Gastrocnemius medialis (tissue), 4 donors: ENCODE measurements at regions of chr5 and their contacts with region 1.

Region 1: DNA sequence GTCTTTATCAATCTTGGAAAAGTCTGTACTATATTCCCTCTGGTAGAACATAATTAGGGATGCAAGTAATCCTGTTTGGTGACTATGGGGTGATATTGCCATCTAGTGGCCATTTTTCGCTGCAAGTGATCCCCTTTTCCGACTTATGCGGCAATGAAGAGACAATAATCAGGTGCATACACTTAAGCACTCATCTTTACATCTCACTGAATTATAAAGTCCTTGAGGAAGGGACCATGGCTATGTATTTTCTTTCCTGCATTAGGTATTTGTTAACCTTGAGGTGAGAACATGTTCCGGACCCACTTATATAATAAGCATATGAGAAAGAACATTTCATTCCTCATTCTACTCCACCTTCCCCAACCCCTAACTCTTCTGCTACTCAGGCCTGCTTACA is 19.6 kb upstream of the LIX1 start:
- DNase-seq: peak; percentile 10 to 36
- ATAC-seq: peak; percentile 66 to 86
- H3K4me3 ChIP-seq: no peak overlapping the region
- H3K27ac ChIP-seq: no peak overlapping the region
- H3K4me1 ChIP-seq: no peaks in the 10 kb centered on the region
- H3K27me3 ChIP-seq: no peaks in the 10 kb centered on the region
- CTCF ChIP-seq: peak; percentile 75 to 89 (median 81)
- POLR2A ChIP-seq: no peak

Region 2: GRCh38 chr5:96344678-96345577 is 817.1 kb before region 1 on chr5:
- in situ Hi-C with region 1: no loop called
- intact Hi-C with region 1: loop called (anchors 10 kb)
- DNase-seq: no peak
- ATAC-seq: peak; percentile 93 to 97
- H3K4me3 ChIP-seq: no peak overlapping the region
- H3K27ac ChIP-seq: no peak overlapping the region
- H3K4me1 ChIP-seq: peaks cover under 1 to 7% of the 10 kb centered on the region in 2 donors
- H3K27me3 ChIP-seq: no peaks in the 10 kb centered on the region
- CTCF ChIP-seq: peak; percentile 35 to 63 (median 59)
- POLR2A ChIP-seq: no peak

Region 3: GRCh38 chr5:96629774-96630173 is 532.3 kb before region 1 on chr5:
- in situ Hi-C with region 1: loop called in 3 of 4 experiments (anchors 25 kb)
- intact Hi-C with region 1: no loop called
- DNase-seq: peak in 1 of 2 donors; percentile 10
- ATAC-seq: peak; percentile 61 to 93
- H3K4me3 ChIP-seq: no peak overlapping the region
- H3K27ac ChIP-seq: no peak overlapping the region
- H3K4me1 ChIP-seq: no peaks in the 10 kb centered on the region
- H3K27me3 ChIP-seq: no peaks in the 10 kb centered on the region
- CTCF ChIP-seq: no peak
- POLR2A ChIP-seq: no peak

Region 4: DNA sequence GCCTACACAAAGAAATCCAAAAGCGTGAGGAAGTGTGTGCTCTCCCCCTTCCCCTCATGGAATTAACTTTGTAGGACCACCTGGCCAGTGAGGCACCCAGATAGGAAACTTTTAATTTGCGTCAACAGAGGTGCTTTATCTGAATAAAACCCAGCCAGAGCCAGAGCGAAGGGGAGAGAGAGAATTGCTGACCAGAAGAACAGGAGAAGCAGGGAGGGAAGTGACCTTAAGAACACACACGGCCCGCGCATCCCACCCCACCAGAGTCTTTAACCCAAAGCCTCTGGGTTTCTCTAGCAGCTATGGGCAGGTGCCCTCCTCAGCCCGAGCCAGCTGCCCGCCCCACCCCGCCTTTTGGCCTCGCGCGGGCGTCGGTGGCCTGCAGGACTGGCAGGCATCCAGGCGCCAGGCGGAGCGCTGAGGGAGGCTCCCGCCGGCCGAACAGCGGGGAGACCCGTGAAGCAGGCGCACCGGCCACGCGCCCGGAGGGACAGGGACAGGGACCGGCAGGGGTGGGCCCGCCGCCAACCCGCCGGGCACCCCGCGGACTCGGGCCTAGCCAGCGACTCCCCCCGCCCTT is 354.9 kb before region 1 on chr5:
- in situ Hi-C with region 1: no loop called
- intact Hi-C with region 1: loop called (anchors 5 kb)
- DNase-seq: peak; percentile 78 to 88
- ATAC-seq: peak; percentile 60 to 64
- H3K4me3 ChIP-seq: peak overlapping the region; percentile 95 to 98 (median 97)
- H3K27ac ChIP-seq: peak overlapping the region; percentile 99 to 100 (median 100)
- H3K4me1 ChIP-seq: peaks cover 11 to 22% of the 10 kb centered on the region in 2 donors
- H3K27me3 ChIP-seq: no peaks in the 10 kb centered on the region
- CTCF ChIP-seq: no peak
- POLR2A ChIP-seq: peak; percentile 71 to 73

Region 5: GRCh38 chr5:96940586-96940985 is 221.5 kb before region 1 on chr5:
- in situ Hi-C with region 1: no loop called
- intact Hi-C with region 1: no loop called
- DNase-seq: no peak
- ATAC-seq: no peak
- H3K4me3 ChIP-seq: no peak overlapping the region
- H3K27ac ChIP-seq: no peak overlapping the region
- H3K4me1 ChIP-seq: peaks cover 43 to 59% of the 10 kb centered on the region in 2 donors
- H3K27me3 ChIP-seq: no peaks in the 10 kb centered on the region
- CTCF ChIP-seq: no peak
- POLR2A ChIP-seq: no peak

Region 6: DNA sequence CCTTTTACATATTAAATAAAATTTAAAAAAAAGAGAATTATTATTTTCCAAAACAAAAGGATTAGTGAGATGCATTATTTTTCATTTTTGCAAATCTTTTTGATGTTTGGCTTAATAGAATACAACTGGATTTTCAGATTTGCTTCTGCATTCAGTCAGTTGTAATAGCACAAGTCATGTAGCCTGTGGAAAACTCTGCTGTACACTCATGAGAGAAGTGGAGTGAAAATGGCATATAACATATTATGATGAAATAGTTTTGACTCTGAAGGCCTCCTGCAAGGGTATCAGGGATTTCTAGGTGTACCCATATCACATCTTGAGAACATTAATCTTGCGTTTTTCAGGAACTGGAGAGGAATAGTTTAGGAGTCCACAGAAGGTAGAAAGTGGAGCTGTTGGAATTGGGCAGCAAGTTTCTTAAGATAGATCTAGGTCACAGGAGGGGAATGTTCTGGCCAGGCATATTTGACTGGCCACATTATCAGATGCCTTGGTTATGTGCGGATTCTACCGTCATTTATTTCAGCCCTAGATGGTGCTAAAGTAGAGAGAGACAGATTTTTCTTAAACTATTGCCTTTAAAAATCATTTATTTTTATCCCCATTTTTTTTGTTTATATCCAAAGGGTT is 209.8 kb before region 1 on chr5:
- in situ Hi-C with region 1: no loop called
- intact Hi-C with region 1: loop called (anchors 5 kb)
- DNase-seq: peak; percentile 13 to 30
- ATAC-seq: peak; percentile 96 to 97
- H3K4me3 ChIP-seq: peak overlapping the region in 2 of 4 donors; percentile 5 to 13
- H3K27ac ChIP-seq: peak overlapping the region; percentile 78 to 90 (median 85)
- H3K4me1 ChIP-seq: peaks cover 46 to 56% of the 10 kb centered on the region in 2 donors
- H3K27me3 ChIP-seq: no peaks in the 10 kb centered on the region
- CTCF ChIP-seq: no peak
- POLR2A ChIP-seq: no peak

Region 7: GRCh38 chr5:97044052-97044451 is 118.0 kb before region 1 on chr5:
- in situ Hi-C with region 1: no loop called
- intact Hi-C with region 1: loop called (anchors 5 kb)
- DNase-seq: no peak
- ATAC-seq: peak; percentile 46 to 62
- H3K4me3 ChIP-seq: no peak overlapping the region
- H3K27ac ChIP-seq: no peak overlapping the region
- H3K4me1 ChIP-seq: peaks cover 0 to under 1% of the 10 kb centered on the region in 2 donors
- H3K27me3 ChIP-seq: no peaks in the 10 kb centered on the region
- CTCF ChIP-seq: peak in 1 of 5 experiments; percentile 30
- POLR2A ChIP-seq: no peak